Uterus (tissue), 4 donors: ENCODE measurements at regions of chr11 and their contacts with region 1.

Region 1: GRCh38 chr11:48109046-48109666 is 107.5 kb upstream of the OR4B1 start:
- DNase-seq: no peak
- H3K4me3 ChIP-seq: no peak overlapping the region
- H3K27ac ChIP-seq: no peak overlapping the region
- H3K4me1 ChIP-seq: peaks cover 0 to 3% of the 10 kb centered on the region in 2 donors
- H3K27me3 ChIP-seq: no peaks in the 10 kb centered on the region
- CTCF ChIP-seq: peak in 2 of 4 experiments; percentile 29 to 39
- POLR2A ChIP-seq: no peak

Region 2: GRCh38 chr11:47705721-47706120 is 403.4 kb before region 1 on chr11:
- intact Hi-C with region 1: no loop called
- DNase-seq: no peak
- H3K4me3 ChIP-seq: no peak overlapping the region
- H3K27ac ChIP-seq: no peak overlapping the region
- H3K4me1 ChIP-seq: no peaks in the 10 kb centered on the region
- H3K27me3 ChIP-seq: no peaks in the 10 kb centered on the region
- CTCF ChIP-seq: no peak
- POLR2A ChIP-seq: no peak

Region 3: GRCh38 chr11:47938791-47939560 is 170.2 kb before region 1 on chr11:
- intact Hi-C with region 1: loop called (anchors 5 kb)
- DNase-seq: no peak
- H3K4me3 ChIP-seq: no peak overlapping the region
- H3K27ac ChIP-seq: no peak overlapping the region
- H3K4me1 ChIP-seq: no peaks in the 10 kb centered on the region
- H3K27me3 ChIP-seq: no peaks in the 10 kb centered on the region
- CTCF ChIP-seq: no peak
- POLR2A ChIP-seq: no peak

Region 4: DNA sequence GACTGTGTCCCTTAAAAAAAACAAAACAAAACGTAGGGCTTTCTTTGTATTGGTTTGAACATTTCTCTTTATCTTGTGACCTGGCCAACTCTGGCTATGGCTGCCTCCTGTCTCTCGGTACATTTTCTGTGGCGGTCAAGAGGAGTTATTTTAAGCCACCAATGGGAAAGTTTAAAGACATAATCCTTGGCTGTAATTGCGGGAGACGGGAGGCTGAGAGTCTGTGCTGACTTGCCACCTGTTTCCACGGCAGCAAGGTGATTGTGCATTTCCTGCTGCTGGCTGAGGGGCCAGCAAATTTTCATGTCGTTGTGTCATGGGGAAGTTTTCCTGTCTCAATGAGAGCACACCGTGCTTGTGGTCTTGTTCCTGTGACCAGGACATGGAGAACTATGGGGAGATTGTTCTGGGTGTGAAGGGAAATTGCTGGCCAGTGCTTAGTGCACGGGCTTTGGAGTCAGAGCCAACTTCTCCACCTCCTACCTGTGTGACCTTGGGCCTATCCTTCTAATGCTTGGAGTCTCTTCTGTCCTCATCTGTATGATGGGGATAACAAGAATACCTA is 117.8 kb before region 1 on chr11:
- intact Hi-C with region 1: no loop called
- DNase-seq: no peak
- H3K4me3 ChIP-seq: no peak overlapping the region
- H3K27ac ChIP-seq: no peak overlapping the region
- H3K4me1 ChIP-seq: no peaks in the 10 kb centered on the region
- H3K27me3 ChIP-seq: no peaks in the 10 kb centered on the region
- CTCF ChIP-seq: no peak
- POLR2A ChIP-seq: no peak

Region 5: DNA sequence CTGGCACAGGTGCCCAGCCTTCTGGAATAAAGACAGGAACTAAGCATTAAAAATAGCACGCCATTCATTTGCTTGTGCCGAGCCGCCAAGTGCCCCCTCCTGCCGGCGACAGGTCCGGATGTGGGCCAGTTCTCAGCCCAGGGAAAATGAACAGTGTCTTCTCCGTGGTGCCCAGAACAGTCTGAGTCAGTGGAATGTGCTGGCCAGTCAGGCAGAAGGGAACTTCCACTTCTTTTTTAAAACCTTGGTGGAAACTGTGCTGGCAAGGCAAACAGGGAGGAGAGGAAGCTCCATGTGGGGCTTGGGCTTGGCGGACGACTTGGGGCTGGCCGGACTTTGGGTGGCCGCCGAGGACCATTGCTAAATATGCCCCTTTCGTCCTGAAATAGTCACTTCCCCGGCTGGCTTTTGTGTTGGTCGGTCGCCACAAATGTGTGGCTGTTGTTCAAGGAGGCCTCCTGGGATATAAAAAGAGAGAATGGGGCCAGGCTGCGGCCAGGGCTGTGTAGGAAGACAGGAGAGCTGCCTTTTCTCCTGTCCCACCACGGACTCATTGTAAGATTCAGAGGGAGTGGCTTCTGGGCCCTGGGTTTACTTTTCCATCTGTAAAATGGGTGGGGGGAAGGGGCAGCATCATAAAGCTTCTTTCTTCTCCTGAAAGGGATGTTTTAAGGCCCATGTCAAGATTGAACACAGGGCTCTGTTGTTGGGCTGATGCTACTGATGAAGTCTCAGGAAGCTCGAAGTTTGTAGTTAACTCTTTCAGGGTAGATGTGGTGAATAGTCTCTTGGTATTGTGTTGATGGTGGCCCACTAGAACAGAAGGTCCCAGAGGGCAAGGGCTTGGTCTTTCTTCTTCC is 27.8 kb before region 1 on chr11:
- intact Hi-C with region 1: no loop called
- DNase-seq: peak; percentile 34 to 51
- H3K4me3 ChIP-seq: no peak overlapping the region
- H3K27ac ChIP-seq: no peak overlapping the region
- H3K4me1 ChIP-seq: no peaks in the 10 kb centered on the region
- H3K27me3 ChIP-seq: no peaks in the 10 kb centered on the region
- CTCF ChIP-seq: no peak
- POLR2A ChIP-seq: no peak